ENCODE measurements at regions of chr20 and their contacts with region 1.

Region 1: GRCh38 chr20:19212821-19213502 is 520 bp downstream of the SLC24A3 start:
- DNase-seq: peak; percentile 54 to 77
- ATAC-seq: peak; percentile 68 to 91 (median 82)
- H3K4me3 ChIP-seq: peak overlapping the region in 9 of 10 donors; percentile 12 to 59 (median 48)
- H3K27ac ChIP-seq: peak overlapping the region in 1 of 10 donors; percentile 58
- H3K4me1 ChIP-seq: peaks cover 0 to 14% (median 8%) of the 10 kb centered on the region in 9 donors
- H3K27me3 ChIP-seq: peaks cover 0 to 64% (median 40%) of the 10 kb centered on the region in 7 donors
- CTCF ChIP-seq: peak in 8 of 9 donors; percentile 22 to 65 (median 44)

Region 2: DNA sequence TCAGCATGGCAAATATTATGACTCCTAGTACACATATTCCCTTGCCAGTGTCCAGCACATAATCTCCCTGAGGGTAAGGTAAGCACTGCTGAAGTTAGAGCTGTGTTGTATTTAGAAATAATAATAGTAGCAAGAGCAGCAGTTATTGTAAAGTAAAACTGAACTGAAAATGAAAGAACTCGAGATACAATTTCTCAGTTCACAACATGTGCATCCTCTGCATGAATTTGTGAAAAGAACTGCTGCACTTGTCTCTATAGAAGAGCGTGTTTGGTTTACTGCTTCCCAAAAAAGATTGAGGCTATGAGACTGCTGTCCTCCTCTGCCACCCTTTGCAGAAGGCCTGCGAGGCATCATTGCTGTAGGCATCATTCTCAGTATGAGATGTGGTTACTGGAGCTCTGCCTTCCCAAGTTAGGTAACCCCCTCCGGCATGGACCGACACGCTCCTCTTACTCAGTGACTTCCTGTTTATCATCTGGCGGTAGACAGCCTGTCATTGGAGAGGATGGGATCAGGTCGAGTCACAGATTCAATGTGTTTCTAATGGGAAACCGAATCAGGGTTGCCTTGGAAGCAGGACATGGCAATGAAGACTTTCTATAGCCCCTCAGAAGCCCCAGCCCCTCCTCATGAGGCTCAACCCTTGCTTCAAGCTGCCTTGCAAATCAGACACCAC is 47.6 kb after region 1 on chr20:
- intact Hi-C with region 1: no loop called
- DNase-seq: no peak
- ATAC-seq: no peak
- H3K4me3 ChIP-seq: no peak overlapping the region
- H3K27ac ChIP-seq: no peak overlapping the region
- H3K4me1 ChIP-seq: peaks cover 0 to 11% (median 0%) of the 10 kb centered on the region in 9 donors
- H3K27me3 ChIP-seq: no peaks in the 10 kb centered on the region
- CTCF ChIP-seq: no peak

Region 3: GRCh38 chr20:19275630-19276072 is 62.7 kb after region 1 on chr20:
- intact Hi-C with region 1: loop called in 1 of 10 experiments (anchors 2 kb)
- DNase-seq: peak; percentile 52 to 88
- ATAC-seq: peak; percentile 91 to 97 (median 94)
- H3K4me3 ChIP-seq: peak overlapping the region in 2 of 10 donors; percentile 8 to 15
- H3K27ac ChIP-seq: peak overlapping the region in 9 of 10 donors; percentile 25 to 65 (median 42)
- H3K4me1 ChIP-seq: peaks cover 4 to 24% (median 22%) of the 10 kb centered on the region in 9 donors
- H3K27me3 ChIP-seq: no peaks in the 10 kb centered on the region
- CTCF ChIP-seq: no peak

Region 4: DNA sequence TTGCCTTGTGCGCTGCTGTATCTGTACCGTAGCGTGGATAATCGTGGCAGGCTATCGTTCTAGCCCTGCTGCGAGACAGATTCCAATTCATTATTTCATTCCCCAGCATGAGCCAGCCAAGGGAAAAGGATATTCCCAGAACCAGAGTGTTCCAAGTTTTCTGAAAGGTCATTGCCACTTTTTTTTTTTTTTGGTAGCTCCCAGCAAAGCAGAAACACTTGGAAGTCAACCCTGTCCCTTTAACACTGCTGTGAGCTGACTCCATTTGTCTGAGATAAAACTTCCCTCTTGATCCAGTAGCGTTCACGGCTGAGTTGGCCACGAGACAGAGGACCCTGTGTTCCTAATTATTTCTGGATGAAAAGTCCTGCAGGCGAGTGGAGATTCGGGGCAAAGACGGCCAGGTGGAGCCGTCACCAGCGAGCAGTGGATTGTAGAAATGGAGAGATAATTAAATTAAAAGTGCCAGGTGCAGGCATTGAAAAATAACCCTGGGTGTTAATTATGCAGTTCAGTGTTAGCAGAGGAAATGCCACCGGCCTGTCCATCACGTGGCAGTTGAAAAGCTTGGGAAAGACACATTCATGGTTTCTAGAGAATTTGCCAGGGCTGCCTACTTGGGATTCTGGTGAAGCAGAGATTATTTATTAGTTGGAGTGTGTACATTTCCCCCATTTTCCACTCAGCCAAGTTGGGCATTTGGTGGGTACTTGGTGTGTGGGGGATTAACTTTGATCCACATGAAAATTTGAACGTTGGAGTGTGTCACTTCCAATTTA is 163.7 kb after region 1 on chr20:
- intact Hi-C with region 1: loop called in 2 of 10 experiments (anchors 5 to 10 kb)
- DNase-seq: peak; percentile 8 to 24
- ATAC-seq: peak; percentile 44 to 91 (median 74)
- H3K4me3 ChIP-seq: peak overlapping the region in 6 of 10 donors; percentile 3 to 37 (median 30)
- H3K27ac ChIP-seq: peak overlapping the region in 2 of 10 donors; percentile 14 to 44
- H3K4me1 ChIP-seq: peaks cover 0 to 14% (median 4%) of the 10 kb centered on the region in 9 donors
- H3K27me3 ChIP-seq: no peaks in the 10 kb centered on the region
- CTCF ChIP-seq: no peak

Region 5: DNA sequence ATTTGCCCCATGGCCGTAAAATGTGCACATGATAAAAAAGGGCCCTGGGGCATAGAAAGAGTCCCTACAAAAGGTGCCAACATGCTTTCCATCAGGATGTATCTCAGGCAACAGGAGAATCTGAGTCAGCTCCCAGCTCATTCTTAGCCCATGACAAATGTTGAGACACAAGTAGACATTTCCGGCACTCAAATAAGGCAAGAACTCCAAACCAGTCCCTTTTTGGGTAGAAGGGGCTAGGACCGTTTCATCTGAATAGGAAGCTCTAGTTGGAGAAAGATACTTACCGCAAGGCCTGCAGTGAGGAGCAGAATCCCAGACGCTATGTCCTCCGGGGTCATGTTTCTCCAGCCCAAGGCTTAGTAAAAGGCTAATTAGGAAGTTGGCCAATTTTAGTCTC is 284.1 kb after region 1 on chr20:
- intact Hi-C with region 1: loop called in 1 of 10 experiments (anchors 10 kb)
- DNase-seq: no peak
- ATAC-seq: no peak
- H3K4me3 ChIP-seq: no peak overlapping the region
- H3K27ac ChIP-seq: no peak overlapping the region
- H3K4me1 ChIP-seq: peaks cover 0 to 19% (median 0%) of the 10 kb centered on the region in 9 donors
- H3K27me3 ChIP-seq: peaks cover 0 to 4% (median 0%) of the 10 kb centered on the region in 7 donors
- CTCF ChIP-seq: no peak

Region 6: DNA sequence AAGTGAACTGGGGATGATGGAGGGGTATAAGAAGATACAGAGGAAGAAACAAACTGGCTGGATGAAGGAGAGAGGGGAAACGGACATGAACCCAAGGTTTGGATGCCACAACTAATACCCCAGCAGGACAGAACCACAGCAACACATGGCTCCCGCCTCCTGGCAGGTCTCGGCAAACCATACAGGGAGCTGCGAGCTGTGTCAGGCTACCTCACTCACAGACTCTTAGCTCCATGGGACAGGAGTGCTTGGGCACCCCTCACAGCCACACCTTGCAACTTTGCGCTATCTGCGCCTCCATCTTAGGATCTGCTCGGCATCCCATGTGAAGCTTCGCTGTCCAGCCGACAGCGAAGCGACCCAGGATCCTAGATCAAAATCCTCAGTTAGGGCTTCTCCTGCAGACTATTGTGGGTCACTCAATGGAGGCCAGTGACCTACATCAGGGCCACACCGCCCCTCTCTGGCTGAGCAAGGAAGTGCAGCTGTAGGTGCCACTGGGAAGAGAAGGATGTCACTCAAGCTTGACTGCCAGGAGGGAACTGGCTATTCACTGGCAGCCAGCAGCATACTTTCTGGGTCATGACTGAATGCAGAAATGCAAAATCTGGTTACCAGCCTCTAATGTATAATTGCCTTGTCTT is 370.7 kb after region 1 on chr20:
- intact Hi-C with region 1: loop called in 2 of 10 experiments (anchors 2 to 5 kb)
- DNase-seq: peak; percentile 54 to 76
- ATAC-seq: peak; percentile 58 to 87 (median 80)
- H3K4me3 ChIP-seq: no peak overlapping the region
- H3K27ac ChIP-seq: no peak overlapping the region
- H3K4me1 ChIP-seq: peaks cover 0 to under 1% (median 0%) of the 10 kb centered on the region in 9 donors
- H3K27me3 ChIP-seq: peaks cover 0 to 24% (median 5%) of the 10 kb centered on the region in 7 donors
- CTCF ChIP-seq: peak; percentile 60 to 87 (median 83)

Region 7: GRCh38 chr20:20894753-20895152 is 1681.8 kb after region 1 on chr20:
- intact Hi-C with region 1: no loop called
- DNase-seq: peak in 1 of 2 donors; percentile 33
- ATAC-seq: peak in 5 of 8 donors; percentile 43 to 82 (median 47)
- H3K4me3 ChIP-seq: no peak overlapping the region
- H3K27ac ChIP-seq: peak overlapping the region in 1 of 10 donors; percentile 15
- H3K4me1 ChIP-seq: peaks cover 0 to 8% (median 0%) of the 10 kb centered on the region in 9 donors
- H3K27me3 ChIP-seq: peaks cover 0 to 19% (median 0%) of the 10 kb centered on the region in 7 donors
- CTCF ChIP-seq: no peak